AG04449 (cell line): ENCODE measurements at regions of chr5 and their contacts with region 1.

Region 1: DNA sequence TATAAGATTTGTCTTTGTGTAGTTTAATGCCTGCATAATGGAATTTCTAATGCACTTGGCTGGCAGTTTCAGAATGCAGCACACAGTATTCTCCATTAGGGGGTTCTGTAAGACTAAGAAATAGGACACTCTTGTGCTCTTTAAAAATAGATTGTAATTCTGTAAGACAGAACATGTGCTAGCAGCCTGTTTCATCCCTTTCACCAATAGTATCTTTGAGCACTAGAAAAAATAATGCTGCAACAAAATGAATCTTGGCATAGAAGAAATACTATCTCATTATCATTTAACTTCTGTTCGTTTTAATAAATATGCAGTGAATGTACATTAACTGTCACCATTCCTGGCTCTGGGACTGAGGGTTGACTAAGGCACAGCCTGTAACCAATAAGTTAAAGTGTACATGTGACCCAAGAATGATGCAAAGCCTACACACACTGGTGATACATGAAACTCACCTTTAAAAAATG is 23.8 kb upstream of the ZNF622 start:
- DNase-seq: peak; percentile 14
- H3K4me3 ChIP-seq: no peak overlapping the region
- CTCF ChIP-seq: peak; percentile 60

Region 2: GRCh38 chr5:16502866-16503265 is 13.5 kb after region 1 on chr5:
- CTCF ChIA-PET with region 1: interaction called, 19 read pairs
- POLR2A ChIA-PET with region 1: no interaction called
- DNase-seq: no peak
- H3K4me3 ChIP-seq: no peak overlapping the region
- CTCF ChIP-seq: no peak

Region 3: GRCh38 chr5:16666883-16667398 is 177.6 kb after region 1 on chr5:
- CTCF ChIA-PET with region 1: interaction called, 18 read pairs
- POLR2A ChIA-PET with region 1: no interaction called
- DNase-seq: no peak
- H3K4me3 ChIP-seq: no peak overlapping the region
- CTCF ChIP-seq: no peak

Region 4: DNA sequence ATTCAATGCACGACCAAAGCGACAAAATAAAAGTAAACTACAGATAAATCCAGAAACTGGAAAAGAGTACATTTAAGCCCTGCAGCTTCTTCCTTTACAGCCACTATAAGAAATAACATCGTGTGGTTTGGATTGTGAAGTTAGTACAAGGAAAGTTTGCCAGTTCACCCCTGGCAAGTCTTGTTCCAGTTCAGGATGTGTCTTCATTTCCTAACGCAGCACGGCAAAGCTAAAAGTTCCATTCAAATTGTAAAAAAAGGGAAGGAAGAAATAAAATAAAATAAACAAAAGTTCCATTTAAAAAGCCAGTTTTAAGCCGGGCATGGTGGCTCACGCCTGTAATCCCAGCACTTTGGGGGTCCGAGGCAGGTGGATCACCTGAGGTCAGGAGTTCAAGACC is 210.7 kb after region 1 on chr5:
- CTCF ChIA-PET with region 1: no interaction called
- POLR2A ChIA-PET with region 1: no interaction called
- DNase-seq: no peak
- H3K4me3 ChIP-seq: no peak overlapping the region
- CTCF ChIP-seq: no peak

Region 5: GRCh38 chr5:17204133-17204489 is 714.8 kb after region 1 on chr5:
- CTCF ChIA-PET with region 1: interaction called, 14 read pairs
- POLR2A ChIA-PET with region 1: no interaction called
- DNase-seq: no peak
- H3K4me3 ChIP-seq: no peak overlapping the region
- CTCF ChIP-seq: no peak